ENCODE measurements at regions of chr19 and their contacts with region 1.

Region 1: GRCh38 chr19:6753178-6754031 is 13.8 kb downstream of the SH2D3A start:
- DNase-seq: peak; percentile 58 to 89 (median 73)
- ATAC-seq: peak; percentile 92
- H3K4me3 ChIP-seq: peak overlapping the region; percentile 47
- H3K4me3 Mint-ChIP-seq: peak overlapping the region; percentile 79
- H3K27ac ChIP-seq: peak overlapping the region; percentile 2 to 15
- H3K27ac Mint-ChIP-seq: peak overlapping the region; percentile 80
- H3K4me1 ChIP-seq: peaks cover 14% of the 10 kb centered on the region
- H3K4me1 Mint-ChIP-seq: peaks cover 11% of the 10 kb centered on the region
- H3K27me3 ChIP-seq: no peaks in the 10 kb centered on the region
- H3K27me3 Mint-ChIP-seq: no peaks in the 10 kb centered on the region
- CTCF ChIP-seq: peak; percentile 59

Region 2: DNA sequence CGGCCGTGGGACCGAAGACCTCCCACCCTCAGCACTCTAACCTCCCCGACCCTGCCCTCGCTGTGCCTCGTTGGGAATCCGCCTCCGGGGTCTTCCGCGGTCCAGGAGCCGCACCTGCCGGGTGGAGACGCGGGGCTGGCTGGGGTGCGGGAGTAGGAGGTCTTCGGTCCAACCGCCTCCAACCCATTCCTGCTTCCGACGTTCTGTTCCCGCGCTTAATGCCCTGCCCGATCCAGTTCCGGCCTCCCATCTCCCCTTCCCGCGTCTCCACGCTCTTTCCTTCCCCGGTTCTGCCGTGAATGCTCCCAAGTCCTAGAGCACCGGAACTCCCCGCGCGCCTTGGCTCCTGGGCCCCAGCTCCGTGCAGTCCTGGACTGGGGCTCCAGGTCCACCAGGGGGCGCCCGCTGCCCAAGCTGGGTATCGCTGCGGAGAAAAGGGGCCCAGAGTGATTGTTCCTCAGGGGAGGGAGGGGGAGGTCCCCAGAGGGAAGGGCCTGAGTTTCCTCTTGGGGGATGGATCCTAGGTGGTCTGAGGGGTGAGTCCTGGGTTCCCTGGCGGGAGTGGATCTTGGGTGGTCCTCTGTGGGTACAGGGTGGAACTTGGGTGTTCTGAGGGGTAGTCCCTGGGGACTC is 236.6 kb before region 1 on chr19:
- CTCF ChIA-PET with region 1: no interaction called
- POLR2A ChIA-PET with region 1: no interaction called
- intact Hi-C with region 1: loop called in 1 of 2 experiments (anchors 5 kb)
- DNase-seq: peak; percentile 81 to 95 (median 90)
- ATAC-seq: peak; percentile 91
- H3K4me3 ChIP-seq: peak overlapping the region; percentile 86
- H3K4me3 Mint-ChIP-seq: peak overlapping the region; percentile 94
- H3K27ac ChIP-seq: no peak overlapping the region
- H3K27ac Mint-ChIP-seq: peak overlapping the region; percentile 24
- H3K4me1 ChIP-seq: peaks cover 32% of the 10 kb centered on the region
- H3K4me1 Mint-ChIP-seq: peaks cover 33% of the 10 kb centered on the region
- H3K27me3 ChIP-seq: no peaks in the 10 kb centered on the region
- H3K27me3 Mint-ChIP-seq: no peaks in the 10 kb centered on the region
- CTCF ChIP-seq: peak; percentile 95